Left ventricle myocardium inferior (tissue), 1 donor: ENCODE measurements at regions of chr2 and their contacts with region 1.

Region 1: DNA sequence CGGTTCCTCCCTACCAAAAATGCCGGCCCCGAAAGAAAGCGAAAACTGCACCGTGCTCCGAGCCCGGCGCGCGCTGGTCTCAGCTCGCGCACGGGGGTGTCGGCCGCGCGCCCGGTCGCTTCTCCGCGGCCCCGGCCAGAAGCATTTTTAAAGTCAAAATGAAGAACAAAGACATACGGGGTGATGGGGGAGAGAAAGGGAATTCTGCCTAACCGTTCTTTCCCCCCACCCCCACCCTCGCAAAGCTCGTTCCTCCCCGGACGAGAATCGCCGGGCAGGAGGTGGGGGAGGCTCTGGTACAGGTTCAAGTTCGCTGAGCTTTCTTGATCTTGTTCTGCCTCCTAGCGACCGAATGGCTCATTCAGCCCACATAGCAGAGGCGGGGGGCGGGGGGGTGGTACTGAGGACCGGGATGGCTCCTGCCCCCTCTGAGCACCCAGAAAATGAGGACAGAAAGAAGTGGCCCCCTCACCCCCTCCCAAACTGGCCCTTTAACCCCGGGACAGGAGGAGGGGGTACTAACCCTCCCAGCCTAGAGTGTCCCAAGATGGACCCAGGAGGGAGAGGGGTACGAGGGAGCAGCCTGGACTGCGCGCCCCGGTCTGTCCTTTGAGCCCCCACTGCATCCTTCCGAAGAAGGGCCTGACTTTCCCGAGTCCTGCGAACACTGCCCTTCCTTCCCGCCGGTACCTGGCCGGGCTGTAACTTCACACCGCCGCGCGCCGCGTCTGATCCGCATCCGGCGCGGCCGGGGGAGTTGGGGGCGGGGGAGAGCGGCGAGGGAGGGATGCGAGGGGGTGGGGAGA is 3.1 kb downstream of the BCL11A start:
- DNase-seq: peak; percentile 66
- H3K4me3 ChIP-seq: peak overlapping the region; percentile 73
- H3K27ac ChIP-seq: peak overlapping the region; percentile 87
- H3K4me1 ChIP-seq: peaks cover 67% of the 10 kb centered on the region
- H3K27me3 ChIP-seq: peaks cover 99% of the 10 kb centered on the region
- CTCF ChIP-seq: peak; percentile 65

Region 2: GRCh38 chr2:60337140-60337494 is 213.3 kb before region 1 on chr2:
- intact Hi-C with region 1: loop called (anchors 5 kb)
- DNase-seq: peak; percentile 27
- H3K4me3 ChIP-seq: no peak overlapping the region
- H3K27ac ChIP-seq: no peak overlapping the region
- H3K4me1 ChIP-seq: no peaks in the 10 kb centered on the region
- H3K27me3 ChIP-seq: no peaks in the 10 kb centered on the region
- CTCF ChIP-seq: peak; percentile 53